PC-3 (cell line): ENCODE measurements at regions of chr6 and their contacts with region 1.

Region 1: DNA sequence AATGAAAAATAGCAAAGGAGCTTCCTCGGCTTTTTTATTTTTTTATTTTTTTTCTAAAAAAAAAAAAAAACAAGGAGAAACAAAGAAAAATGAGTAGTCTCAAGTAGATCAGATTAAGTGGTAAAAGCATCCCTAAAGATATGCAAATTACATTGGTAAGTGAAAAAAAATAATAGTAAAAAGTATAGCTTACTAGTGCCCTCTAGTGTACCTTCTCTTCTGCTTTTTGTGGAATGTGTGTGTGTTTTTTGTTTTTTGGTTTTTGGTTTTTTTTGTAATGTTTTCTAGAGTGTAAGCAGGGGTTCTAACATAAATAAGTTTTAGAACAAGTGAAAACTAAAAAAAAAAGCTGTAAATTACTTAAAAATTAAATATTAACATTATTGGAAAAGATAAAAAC is 1062.0 kb downstream of the HACE1 start:
- DNase-seq: peak; percentile 30
- ATAC-seq: no peak
- H3K4me3 ChIP-seq: no peak overlapping the region
- H3K27ac ChIP-seq: no peak overlapping the region
- H3K4me1 ChIP-seq: no peaks in the 10 kb centered on the region
- H3K27me3 ChIP-seq: no peaks in the 10 kb centered on the region
- CTCF ChIP-seq: peak; percentile 56

Region 2: GRCh38 chr6:103672169-103672568 is 125.6 kb before region 1 on chr6:
- CTCF ChIA-PET with region 1: no interaction called
- POLR2A ChIA-PET with region 1: interaction called, 8 read pairs
- intact Hi-C with region 1: loop called (anchors 10 kb)
- DNase-seq: peak; percentile 49
- ATAC-seq: no peak
- H3K4me3 ChIP-seq: no peak overlapping the region
- H3K27ac ChIP-seq: no peak overlapping the region
- H3K4me1 ChIP-seq: no peaks in the 10 kb centered on the region
- H3K27me3 ChIP-seq: no peaks in the 10 kb centered on the region
- CTCF ChIP-seq: peak; percentile 37; the same call in 1 of the 2 replicates

Region 3: DNA sequence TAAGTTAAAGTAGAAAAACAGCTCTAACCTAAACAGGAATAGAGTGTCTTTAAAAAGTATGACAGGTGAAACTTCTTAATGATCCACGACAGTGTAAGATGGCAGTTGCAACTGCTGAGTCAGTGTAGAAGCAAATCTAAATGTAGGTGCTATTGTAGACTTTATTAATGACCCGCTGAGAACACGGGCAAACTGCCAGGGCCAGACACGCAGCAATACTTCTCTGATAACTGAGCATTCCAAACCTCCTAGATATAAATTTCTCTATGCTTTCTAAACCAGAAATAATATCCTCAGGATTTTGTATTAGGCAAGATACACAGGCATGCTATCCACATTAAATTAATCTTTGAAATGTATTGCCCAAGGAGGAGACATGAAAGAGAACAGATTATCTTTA is 14.4 kb before region 1 on chr6:
- CTCF ChIA-PET with region 1: no interaction called
- POLR2A ChIA-PET with region 1: no interaction called
- intact Hi-C with region 1: no loop called
- DNase-seq: peak; percentile 32
- ATAC-seq: 0 out of 2 replicates have a peak, but pooled peaks have one; percentile 29
- H3K4me3 ChIP-seq: no peak overlapping the region
- H3K27ac ChIP-seq: no peak overlapping the region
- H3K4me1 ChIP-seq: no peaks in the 10 kb centered on the region
- H3K27me3 ChIP-seq: no peaks in the 10 kb centered on the region
- CTCF ChIP-seq: no peak